ENCODE measurements at regions of chr1 and their contacts with region 1.

Region 1: DNA sequence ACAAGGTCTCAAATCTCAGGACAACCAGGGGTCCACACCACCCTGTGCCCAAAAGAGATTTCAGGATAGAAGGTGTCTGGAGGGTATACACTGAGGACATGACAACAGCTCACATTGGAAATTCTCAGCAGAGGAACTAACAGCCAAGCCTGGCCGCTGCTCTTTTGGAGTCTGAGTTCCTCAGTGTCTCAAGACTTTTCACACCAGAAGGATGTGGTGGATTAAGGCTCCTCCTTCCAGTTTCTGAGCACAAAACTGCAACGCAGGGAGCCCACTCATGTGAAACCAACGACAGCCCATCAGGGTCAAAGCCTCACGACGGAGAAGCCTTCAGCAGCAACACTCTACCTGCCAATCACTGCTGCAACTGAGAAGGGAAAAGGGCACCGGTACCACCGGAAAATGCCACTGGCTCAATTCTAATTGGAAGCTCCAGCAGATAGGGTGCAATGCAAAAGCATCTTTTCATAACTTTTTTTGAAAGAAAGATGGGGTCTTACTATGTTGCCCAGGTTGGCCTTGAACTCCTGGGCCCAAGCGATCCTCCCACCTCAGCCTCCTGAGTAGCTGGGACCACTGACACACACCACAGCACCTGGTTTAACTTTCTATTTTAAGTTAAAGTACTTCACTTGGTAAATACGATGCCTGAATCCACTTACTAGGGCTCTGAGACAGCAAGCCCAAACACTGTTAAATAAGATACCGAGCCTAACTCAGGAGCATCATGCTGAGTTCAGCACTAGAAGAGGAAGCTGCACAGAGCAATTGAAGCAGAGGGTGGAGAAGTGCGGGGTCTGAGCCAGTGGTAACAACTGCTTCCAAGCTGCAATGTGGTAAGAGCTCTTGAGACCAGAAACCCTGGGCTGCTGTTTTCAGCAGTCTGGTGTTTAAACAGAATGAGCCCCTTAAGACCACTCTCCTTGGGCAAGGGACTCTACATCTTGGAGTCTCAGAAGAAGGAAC is 7.8 kb downstream of the CAPZB start:
- DNase-seq: no peak
- ATAC-seq: peak in 3 of 4 donors; percentile 24 to 27 (median 26)
- H3K4me3 ChIP-seq: no peak overlapping the region
- H3K27ac ChIP-seq: peak overlapping the region; percentile 53
- H3K4me1 ChIP-seq: peaks cover 75% of the 10 kb centered on the region
- H3K27me3 ChIP-seq: no peaks in the 10 kb centered on the region
- CTCF ChIP-seq: no peak

Region 2: GRCh38 chr1:19390901-19391595 is 86.5 kb before region 1 on chr1:
- intact Hi-C with region 1: loop called in 1 of 2 experiments (anchors 5 kb)
- DNase-seq: peak; percentile 58 to 75
- ATAC-seq: peak in 3 of 4 donors; percentile 33 to 68 (median 37)
- H3K4me3 ChIP-seq: no peak overlapping the region
- H3K27ac ChIP-seq: peak overlapping the region; percentile 52
- H3K4me1 ChIP-seq: peaks cover 37% of the 10 kb centered on the region
- H3K27me3 ChIP-seq: no peaks in the 10 kb centered on the region
- CTCF ChIP-seq: peak; percentile 67